ENCODE measurements at regions of chr11 and their contacts with region 1.

Region 1: DNA sequence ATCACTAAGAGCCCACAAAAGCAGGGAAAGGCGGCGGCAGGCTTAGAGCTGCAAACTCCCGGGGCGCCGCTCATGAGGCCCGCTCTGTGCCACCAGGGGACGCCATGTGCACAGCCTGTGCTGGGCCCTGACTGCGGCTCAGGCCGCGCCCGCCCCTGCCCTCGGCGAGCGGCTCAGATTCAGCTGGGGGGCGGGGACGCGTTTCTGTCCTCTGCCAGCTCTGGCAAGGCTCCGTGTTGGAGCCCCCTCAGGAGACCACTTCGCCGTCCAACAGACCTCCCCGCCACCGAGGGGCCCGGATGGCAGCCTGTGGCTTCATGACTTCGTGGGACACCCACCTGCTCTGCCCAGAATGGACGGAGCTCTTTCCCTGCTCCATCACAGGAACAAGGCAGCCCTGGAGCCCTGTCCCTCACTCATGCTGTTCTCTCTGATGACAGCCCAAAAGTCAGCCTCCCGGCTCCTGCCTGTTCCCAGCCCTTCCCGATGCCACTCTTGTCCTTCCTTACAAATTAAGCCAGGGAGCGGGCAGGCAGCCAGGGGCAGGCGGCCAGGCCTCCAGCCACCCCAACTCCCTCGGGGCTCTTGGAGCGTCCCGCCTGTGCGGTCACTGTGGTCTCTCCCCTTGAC is 69.1 kb downstream of the NAT10 start:
- DNase-seq: peak; percentile 86
- H3K4me3 ChIP-seq: peak overlapping the region; percentile 28
- H3K27ac ChIP-seq: no peak overlapping the region
- H3K4me1 ChIP-seq: no peaks in the 10 kb centered on the region
- H3K27me3 ChIP-seq: no peaks in the 10 kb centered on the region
- CTCF ChIP-seq: peak; percentile 92

Region 2: GRCh38 chr11:34134765-34135164 is 39.8 kb before region 1 on chr11:
- intact Hi-C with region 1: no loop called
- DNase-seq: no peak
- H3K4me3 ChIP-seq: no peak overlapping the region
- H3K27ac ChIP-seq: no peak overlapping the region
- H3K4me1 ChIP-seq: no peaks in the 10 kb centered on the region
- H3K27me3 ChIP-seq: no peaks in the 10 kb centered on the region
- CTCF ChIP-seq: no peak

Region 3: DNA sequence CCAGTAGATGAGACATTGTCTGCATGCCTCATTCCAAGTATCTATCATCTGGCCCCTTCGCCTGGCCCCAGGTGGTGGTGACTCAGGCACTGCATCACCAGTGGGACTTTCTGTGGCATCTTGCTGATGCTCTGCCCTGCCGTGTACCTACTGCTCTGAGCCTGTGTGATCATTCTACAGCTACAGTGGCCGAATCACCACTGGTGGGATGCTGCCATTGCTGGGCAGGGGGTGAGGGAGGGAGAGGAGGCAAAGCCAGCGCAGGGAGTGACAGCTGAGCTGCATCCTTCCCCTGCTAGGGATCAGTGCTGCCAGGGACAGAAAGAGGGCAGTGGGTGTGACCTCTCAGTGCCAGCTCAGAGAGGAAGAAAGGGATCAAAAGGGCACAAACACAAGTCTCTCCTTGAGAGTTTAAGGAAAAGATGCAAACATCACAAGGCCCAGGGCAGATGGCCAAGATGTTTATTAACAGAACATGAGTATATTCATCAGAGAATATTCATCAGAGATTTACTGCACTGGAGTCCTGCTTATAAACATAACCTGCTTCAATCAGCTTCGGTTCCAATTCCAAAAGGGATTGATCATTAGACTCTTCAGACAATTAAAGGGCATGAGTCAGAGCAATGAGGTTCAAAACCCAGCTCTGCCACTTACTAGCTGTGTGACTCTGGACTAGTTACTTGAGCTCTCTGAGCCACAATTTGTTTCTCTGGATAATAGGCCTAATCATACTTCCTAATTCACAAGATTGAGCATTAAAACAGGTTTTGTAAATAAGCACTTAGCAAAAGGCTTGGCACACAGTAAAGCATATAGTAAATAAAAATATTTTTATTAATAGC is 40.7 kb after region 1 on chr11:
- intact Hi-C with region 1: no loop called
- DNase-seq: no peak
- H3K4me3 ChIP-seq: no peak overlapping the region
- H3K27ac ChIP-seq: no peak overlapping the region
- H3K4me1 ChIP-seq: no peaks in the 10 kb centered on the region
- H3K27me3 ChIP-seq: no peaks in the 10 kb centered on the region
- CTCF ChIP-seq: no peak

Region 4: DNA sequence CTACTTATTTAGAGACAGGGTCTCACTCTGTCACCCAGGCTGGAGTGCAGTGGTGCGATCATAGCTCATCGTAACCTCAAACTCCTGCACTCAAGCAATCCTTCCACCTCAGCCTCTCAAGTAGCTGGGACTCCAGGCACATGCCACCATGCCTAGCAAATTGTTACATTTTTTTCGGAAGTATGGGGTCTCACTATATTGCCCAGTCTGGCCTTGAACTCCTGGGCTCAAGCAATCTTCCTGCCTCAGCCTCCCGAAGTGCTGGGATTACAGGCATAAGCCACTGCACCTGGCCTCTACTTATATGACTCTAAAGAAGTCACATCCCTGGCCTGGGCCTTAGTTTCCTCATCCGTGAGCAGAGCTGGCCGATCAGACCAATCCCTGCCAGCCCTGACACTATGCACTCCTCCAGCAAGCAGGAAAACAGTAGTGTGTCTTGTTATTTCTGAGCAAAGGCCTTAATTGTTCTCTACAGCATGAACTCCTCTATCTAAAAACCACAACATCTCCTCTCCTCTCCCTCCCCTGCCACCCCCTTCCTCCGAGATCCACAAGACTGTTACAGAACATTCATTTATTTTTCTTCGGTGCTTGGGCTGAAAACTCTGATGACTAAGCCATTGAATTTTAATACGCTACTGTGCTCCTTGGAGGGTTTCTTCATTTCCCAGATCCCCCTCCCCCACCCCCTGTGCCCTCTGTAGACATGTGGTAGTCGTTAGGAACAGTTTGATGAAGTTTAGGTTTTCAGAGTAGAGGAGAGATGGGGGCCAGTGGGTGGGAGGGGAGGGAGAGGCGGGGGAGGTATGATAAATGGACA is 91.8 kb after region 1 on chr11:
- intact Hi-C with region 1: no loop called
- DNase-seq: no peak
- H3K4me3 ChIP-seq: no peak overlapping the region
- H3K27ac ChIP-seq: no peak overlapping the region
- H3K4me1 ChIP-seq: no peaks in the 10 kb centered on the region
- H3K27me3 ChIP-seq: no peaks in the 10 kb centered on the region
- CTCF ChIP-seq: no peak

Region 5: GRCh38 chr11:34344768-34345539 is 170.4 kb after region 1 on chr11:
- intact Hi-C with region 1: no loop called
- DNase-seq: peak; percentile 62
- H3K4me3 ChIP-seq: no peak overlapping the region
- H3K27ac ChIP-seq: no peak overlapping the region
- H3K4me1 ChIP-seq: no peaks in the 10 kb centered on the region
- H3K27me3 ChIP-seq: no peaks in the 10 kb centered on the region
- CTCF ChIP-seq: no peak

Region 6: GRCh38 chr11:34357701-34358257 is 183.3 kb after region 1 on chr11 and contains the start of gene ABTB2:
- intact Hi-C with region 1: loop called (anchors 2 kb)
- DNase-seq: peak; percentile 99
- H3K4me3 ChIP-seq: peak within 1 kb of the TSS; percentile 75
- H3K27ac ChIP-seq: peak within 1 kb of the TSS; percentile 81
- H3K4me1 ChIP-seq: peaks cover 10% of the 10 kb centered on the region
- H3K27me3 ChIP-seq: peaks cover 9% of the 10 kb centered on the region
- CTCF ChIP-seq: no peak
- total RNA-seq, gene ABTB2: 5.8 to 11.1 TPM

Region 7: DNA sequence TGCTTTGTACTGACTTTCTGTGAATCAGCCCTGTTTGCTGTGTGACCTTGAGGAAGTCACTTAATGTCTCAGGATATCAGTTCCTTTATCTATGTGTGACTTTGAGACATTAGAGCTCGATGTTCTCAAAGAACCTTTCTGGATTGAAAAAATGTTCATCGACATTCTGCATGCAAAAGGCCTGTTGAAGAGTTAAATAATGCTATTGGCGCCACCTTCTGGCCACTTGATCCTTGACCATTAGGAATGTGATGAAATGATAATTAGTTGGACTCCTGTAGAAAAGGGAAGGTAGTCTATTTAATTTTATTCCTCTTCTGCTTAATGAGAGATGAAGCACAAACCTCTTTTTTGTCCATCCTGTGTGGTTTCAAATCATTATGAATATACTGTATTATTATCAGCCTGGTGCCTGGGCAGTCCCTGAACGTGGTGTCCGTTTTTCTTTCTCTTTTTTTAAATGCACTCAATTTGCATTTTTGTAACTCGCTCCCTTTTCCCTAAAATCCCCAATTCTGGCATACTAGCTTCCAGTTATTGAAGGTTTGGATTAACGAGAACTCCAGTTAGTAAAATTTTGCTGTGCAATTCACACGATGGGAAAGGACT is 318.4 kb after region 1 on chr11:
- intact Hi-C with region 1: loop called (anchors 10 kb)
- DNase-seq: peak; percentile 66
- H3K4me3 ChIP-seq: no peak overlapping the region
- H3K27ac ChIP-seq: no peak overlapping the region
- H3K4me1 ChIP-seq: no peaks in the 10 kb centered on the region
- H3K27me3 ChIP-seq: no peaks in the 10 kb centered on the region
- CTCF ChIP-seq: peak; percentile 57

Measured in colonic mucosa (tissue), 4 donors.